ENCODE measurements at regions of chr7 and their contacts with region 1.

Region 1: DNA sequence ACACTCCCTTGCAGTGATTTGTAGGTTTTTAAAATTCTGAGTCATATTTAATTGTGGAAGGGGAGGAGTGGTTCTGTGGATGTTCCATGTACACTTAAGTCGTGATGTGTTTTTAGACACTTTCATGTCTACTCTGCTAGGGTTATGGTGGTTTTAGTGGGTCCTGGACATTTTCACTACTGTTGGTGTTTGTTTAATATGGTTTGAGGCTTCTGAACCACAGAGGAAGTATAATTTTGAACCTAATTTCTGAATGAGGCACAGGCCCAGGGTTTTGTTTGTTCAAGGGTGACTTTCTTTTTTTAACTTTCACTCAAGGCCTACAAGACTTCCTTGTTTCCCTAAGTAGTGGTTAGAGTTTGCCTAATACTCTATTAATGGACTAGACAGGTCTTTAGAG is 13.3 kb downstream of the SLC26A5 start:
- DNase-seq: peak; percentile 12
- ATAC-seq: peak; percentile 42; the same call in 2 of the 3 replicates
- H3K4me3 ChIP-seq: no peak overlapping the region
- H3K27ac ChIP-seq: no peak overlapping the region
- H3K4me1 ChIP-seq: 0 out of 2 replicates have a peak, but pooled peaks cover 3% of the 10 kb centered on the region
- H3K27me3 ChIP-seq: no peaks in the 10 kb centered on the region
- CTCF ChIP-seq: no peak
- EP300 ChIP-seq: no peak
- POLR2A ChIP-seq: no peak
- RAD21 ChIP-seq: no peak

Region 2: DNA sequence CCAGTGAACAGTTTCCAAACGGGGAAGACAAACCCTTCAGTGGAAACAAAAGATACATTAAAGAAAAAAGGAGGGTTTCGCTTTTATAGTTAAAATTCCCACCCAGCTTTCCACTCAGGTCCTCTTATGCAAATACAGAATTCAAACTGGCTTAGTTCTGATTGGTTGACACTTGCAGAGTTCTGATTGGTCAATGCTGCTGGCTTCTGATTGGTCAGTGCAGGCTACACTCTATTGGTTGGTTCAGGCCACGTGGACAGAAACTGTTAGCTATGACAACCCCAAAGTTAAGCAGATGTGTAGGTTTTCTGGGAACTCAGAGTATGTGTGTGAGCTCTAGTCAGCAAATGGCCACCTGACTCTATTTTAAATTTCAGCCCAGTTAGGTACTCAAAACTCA is 438.1 kb before region 1 on chr7:
- CTCF ChIA-PET with region 1: no interaction called
- POLR2A ChIA-PET with region 1: interaction called, 10 read pairs
- RAD21 ChIA-PET with region 1: no interaction called
- SMC1A ChIA-PET with region 1: no interaction called
- in situ Hi-C with region 1: no loop called
- intact Hi-C with region 1: no loop called
- DNase-seq: no peak
- ATAC-seq: no peak
- H3K4me3 ChIP-seq: no peak overlapping the region
- H3K27ac ChIP-seq: no peak overlapping the region
- H3K4me1 ChIP-seq: no peaks in the 10 kb centered on the region
- H3K27me3 ChIP-seq: peaks cover 0 to 3% of the 10 kb centered on the region in 2 experiments; a peak in 1 of 4 replicates
- CTCF ChIP-seq: no peak
- EP300 ChIP-seq: no peak
- POLR2A ChIP-seq: no peak
- RAD21 ChIP-seq: no peak

Region 3: DNA sequence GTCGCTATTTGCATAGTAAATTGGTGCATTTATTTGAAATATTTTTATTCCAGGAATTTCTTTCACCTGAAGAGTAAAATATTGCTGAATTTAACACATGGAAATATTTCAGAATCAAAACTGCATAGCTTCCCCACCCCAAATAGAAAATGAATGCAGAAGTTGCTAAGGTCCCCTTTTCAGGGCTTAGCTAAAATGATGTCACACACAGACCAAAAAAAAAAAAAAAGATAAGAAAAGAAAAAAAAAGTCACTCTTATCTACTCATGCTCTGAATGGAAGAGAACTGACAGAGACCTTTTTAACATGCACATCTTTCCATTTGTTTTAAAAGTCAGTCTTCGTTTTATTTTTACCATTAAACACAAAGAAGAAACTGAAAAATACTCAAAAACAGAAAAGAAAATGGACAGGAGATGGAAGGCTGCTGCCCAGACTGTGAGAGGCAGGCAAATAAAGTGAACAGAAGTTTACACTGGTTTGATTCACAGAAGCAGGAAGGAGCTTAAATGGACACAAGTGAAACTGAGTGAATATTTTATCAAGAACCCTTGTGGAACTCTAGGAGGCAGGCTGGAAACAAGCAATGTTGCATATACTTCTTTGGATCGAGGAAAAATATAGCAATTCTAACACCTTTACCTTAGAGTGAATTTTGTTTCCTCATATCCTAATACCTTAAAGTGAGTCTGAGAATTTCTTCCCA is 53.3 kb before region 1 on chr7:
- CTCF ChIA-PET with region 1: no interaction called
- POLR2A ChIA-PET with region 1: no interaction called
- RAD21 ChIA-PET with region 1: no interaction called
- SMC1A ChIA-PET with region 1: no interaction called
- in situ Hi-C with region 1: no loop called
- intact Hi-C with region 1: no loop called
- DNase-seq: no peak
- ATAC-seq: no peak
- H3K4me3 ChIP-seq: no peak overlapping the region
- H3K27ac ChIP-seq: no peak overlapping the region
- H3K4me1 ChIP-seq: no peaks in the 10 kb centered on the region
- H3K27me3 ChIP-seq: no peaks in the 10 kb centered on the region; a peak in 1 of 4 replicates
- CTCF ChIP-seq: no peak
- EP300 ChIP-seq: no peak
- POLR2A ChIP-seq: no peak
- RAD21 ChIP-seq: no peak

Measured in GM12878 (cell line).